ENCODE measurements at regions of chr10 and their contacts with region 1.

Region 1: DNA sequence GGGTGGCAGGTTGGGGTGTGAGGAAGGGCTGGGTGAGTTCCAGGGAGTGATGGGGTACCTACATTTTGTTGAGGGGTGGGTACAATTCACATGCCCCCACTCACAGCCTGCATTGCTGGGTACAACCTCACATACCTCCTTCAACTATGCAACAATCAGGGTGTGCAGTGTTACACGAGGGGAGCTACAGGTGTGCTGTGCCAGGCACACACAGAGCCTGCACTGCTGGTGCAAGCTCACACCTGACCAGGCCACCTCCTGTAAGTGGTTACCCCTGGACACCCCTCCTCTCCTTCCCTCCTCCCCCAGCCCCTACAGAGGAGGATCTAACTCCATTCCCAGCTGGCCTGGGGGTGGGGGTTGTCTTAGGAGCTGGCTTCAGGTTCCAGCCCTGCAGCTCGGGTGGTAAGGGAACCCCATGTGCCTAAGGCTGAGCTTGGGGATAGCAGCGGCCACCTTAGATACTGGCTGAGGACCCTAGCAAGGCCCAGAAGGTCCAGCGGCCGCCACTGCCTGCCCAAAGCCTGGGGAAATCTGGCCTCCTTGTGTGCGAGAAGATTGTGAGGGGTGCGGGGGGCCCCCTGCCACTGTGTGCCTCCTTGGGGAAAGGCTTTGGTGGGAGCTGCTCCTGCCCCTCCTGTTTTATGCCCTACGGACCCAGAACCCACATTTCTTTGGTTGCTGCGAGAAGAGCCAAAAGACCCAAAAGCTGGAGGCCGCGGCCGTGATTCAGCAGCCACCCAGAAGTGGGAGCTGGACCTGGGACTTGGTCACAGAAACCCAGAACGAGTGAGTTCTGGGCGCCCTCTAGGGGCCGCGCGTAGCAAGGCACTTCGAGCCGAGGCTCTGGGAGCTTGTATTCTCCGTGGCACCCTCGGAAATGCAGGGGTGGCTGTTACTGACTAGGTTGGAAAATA is 10.8 kb downstream of the TLX1 start:
- DNase-seq: peak; percentile 60 to 87 (median 76)
- ATAC-seq: peak; percentile 76 to 87
- H3K4me3 Mint-ChIP-seq: peak overlapping the region in 2 of 10 donors; percentile 14 to 44
- H3K27ac Mint-ChIP-seq: peak overlapping the region in 1 of 10 donors; percentile 24
- H3K4me1 Mint-ChIP-seq: peaks cover 13 to 38% (median 32%) of the 10 kb centered on the region in 4 donors
- H3K27me3 Mint-ChIP-seq: peaks cover 32 to 98% (median 66%) of the 10 kb centered on the region in 5 donors

Region 2: DNA sequence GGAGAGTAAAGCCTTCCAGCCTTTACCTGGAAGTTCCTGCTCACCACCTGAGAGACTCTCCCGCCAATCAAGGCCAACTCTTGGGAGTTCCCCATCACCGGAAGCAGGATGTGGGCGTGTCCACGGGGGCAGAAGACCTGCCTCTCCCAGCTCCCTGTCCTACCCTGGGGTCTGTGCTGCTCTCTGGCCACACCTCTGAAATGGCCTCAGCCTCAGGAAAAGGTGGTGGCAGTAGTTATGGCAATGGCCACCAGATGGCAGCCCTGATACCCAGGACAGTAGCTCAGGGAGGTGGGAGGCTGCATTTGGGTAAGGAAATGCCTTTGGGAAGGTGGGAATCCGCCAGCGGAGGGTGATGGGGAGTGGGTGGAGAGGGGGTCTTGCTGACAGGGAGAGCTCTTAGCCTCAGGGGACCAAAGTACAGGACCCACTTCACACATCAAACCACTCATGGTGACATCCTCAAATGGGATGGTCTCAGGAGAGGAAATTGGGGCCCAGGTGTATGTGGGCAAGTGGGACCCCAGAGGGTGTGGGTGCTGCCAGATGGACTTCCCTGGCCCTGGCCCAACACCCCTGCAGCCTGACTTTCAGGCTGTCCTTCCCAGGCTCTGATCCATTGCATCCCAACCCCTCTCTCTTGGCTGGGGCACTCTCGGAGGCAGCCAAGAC is 46.2 kb before region 1 on chr10:
- POLR2A ChIA-PET with region 1: interaction called, 10 read pairs
- DNase-seq: peak; percentile 48 to 81 (median 64)
- ATAC-seq: peak; percentile 89 to 96
- H3K4me3 Mint-ChIP-seq: no peak overlapping the region
- H3K27ac Mint-ChIP-seq: peak overlapping the region in 1 of 10 donors; percentile 34
- H3K4me1 Mint-ChIP-seq: peaks cover 2 to 6% (median 3%) of the 10 kb centered on the region in 4 donors
- H3K27me3 Mint-ChIP-seq: peaks cover 30 to 93% (median 56%) of the 10 kb centered on the region in 5 donors

Region 3: DNA sequence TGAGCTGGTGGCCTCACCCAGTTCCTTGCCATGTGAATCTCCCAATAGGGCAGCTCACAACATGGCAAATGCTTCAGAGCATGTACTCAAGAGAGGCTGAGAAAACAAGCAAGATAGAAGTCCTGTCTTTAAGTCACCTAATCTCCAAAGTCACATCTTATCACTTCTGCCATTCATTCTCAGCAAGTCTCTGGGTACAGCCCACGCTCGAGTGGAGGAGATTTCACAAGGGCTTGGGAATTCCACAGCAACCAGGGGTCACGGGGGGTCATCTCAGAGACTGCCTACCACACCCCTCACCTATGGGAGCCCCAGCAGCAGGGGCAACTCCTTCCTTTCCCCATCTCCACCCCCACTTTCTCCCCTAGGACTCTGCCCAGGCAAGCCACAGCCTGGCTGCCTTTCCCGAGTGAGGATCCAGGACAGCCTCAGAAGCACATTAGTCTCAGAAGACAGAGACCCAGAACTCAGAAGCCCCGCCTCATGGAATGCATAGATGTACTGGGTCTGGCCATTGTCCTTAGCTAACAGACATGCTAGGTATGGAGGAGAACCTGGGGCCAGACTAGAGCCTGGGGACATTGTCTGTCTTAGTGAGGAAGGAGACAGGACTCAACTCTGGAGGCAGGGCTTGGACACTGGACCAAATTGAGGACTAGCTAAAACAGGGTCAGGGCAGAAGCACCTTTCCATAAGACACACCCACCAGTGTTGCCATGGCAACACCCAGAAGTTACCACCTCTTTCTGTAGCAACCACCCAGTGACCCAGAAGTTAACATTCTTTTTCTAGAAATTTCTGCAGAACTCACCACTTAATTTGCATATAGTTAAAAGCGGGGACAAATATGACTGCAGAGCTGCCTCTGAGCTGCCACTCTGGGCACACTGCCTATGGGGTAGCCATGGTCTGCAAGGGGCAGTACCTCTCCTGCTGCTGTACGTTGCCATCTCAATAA is 16.5 kb after region 1 on chr10:
- POLR2A ChIA-PET with region 1: no interaction called
- DNase-seq: no peak
- ATAC-seq: no peak
- H3K4me3 Mint-ChIP-seq: no peak overlapping the region
- H3K27ac Mint-ChIP-seq: no peak overlapping the region
- H3K4me1 Mint-ChIP-seq: peaks cover 4 to 14% (median 10%) of the 10 kb centered on the region in 4 donors
- H3K27me3 Mint-ChIP-seq: peaks cover 20 to 78% (median 41%) of the 10 kb centered on the region in 5 donors

Region 4: DNA sequence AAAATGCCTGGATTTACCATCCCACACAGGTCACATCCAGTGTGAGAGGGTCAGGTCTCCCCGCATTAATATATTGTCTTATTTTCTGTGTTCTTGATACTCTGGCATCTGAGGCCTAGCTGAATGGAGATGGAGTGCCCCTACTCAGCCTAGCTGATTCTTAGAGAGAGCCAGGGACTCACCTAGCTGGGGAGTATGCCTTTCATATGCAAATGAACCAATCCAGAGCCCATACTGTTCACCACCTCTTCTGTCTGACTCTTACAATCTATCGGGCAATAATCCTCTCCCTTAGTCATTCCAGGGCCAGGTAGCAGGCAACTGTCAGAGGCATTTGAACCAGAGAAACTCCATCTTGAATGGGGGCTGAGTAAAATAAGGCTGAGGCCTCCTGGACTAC is 41.1 kb after region 1 on chr10:
- POLR2A ChIA-PET with region 1: no interaction called
- DNase-seq: no peak
- ATAC-seq: no peak
- H3K4me3 Mint-ChIP-seq: no peak overlapping the region
- H3K27ac Mint-ChIP-seq: no peak overlapping the region
- H3K4me1 Mint-ChIP-seq: no peaks in the 10 kb centered on the region
- H3K27me3 Mint-ChIP-seq: peaks cover 12 to 27% (median 20%) of the 10 kb centered on the region in 5 donors